Calu3 (cell line): ENCODE measurements at regions of chr12 and their contacts with region 1.

Region 1: DNA sequence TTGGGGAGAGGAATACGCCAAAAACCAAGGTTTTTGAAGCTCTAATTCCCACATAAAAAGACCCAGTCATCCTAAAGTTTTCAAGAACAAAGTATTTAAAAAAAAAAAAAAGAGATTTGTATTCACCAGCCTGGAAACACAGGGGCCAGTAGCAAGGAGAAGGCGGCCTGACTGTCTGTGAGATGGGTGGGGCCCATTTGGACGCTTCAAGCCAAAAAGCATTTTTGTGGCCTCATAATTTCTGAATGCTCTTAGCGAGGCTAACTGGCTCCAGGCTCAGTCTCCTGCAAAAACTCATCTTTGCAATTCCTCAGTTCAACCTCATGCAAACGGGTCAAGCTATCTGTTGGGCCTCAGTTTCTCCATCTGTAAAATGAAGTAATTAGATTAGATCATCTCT is 514.1 kb downstream of the MED13L start:
- DNase-seq: no peak
- H3K4me3 Mint-ChIP-seq: no peak overlapping the region
- H3K27ac Mint-ChIP-seq: no peak overlapping the region
- H3K4me1 Mint-ChIP-seq: no peaks in the 10 kb centered on the region
- H3K27me3 Mint-ChIP-seq: no peaks in the 10 kb centered on the region
- CTCF ChIP-seq: no peak

Region 2: GRCh38 chr12:115672506-115673080 is 90.8 kb before region 1 on chr12:
- CTCF ChIA-PET with region 1: interaction called, 11 read pairs
- intact Hi-C with region 1: no loop called
- DNase-seq: no peak
- H3K4me3 Mint-ChIP-seq: no peak overlapping the region
- H3K27ac Mint-ChIP-seq: no peak overlapping the region
- H3K4me1 Mint-ChIP-seq: no peaks in the 10 kb centered on the region
- H3K27me3 Mint-ChIP-seq: no peaks in the 10 kb centered on the region
- CTCF ChIP-seq: no peak

Region 3: GRCh38 chr12:115687094-115687493 is 76.3 kb before region 1 on chr12:
- CTCF ChIA-PET with region 1: no interaction called
- intact Hi-C with region 1: no loop called
- DNase-seq: no peak
- H3K4me3 Mint-ChIP-seq: no peak overlapping the region
- H3K27ac Mint-ChIP-seq: no peak overlapping the region
- H3K4me1 Mint-ChIP-seq: no peaks in the 10 kb centered on the region
- H3K27me3 Mint-ChIP-seq: no peaks in the 10 kb centered on the region
- CTCF ChIP-seq: no peak